Caco-2 (cell line): ENCODE measurements at regions of chr2 and their contacts with region 1.

Region 1: DNA sequence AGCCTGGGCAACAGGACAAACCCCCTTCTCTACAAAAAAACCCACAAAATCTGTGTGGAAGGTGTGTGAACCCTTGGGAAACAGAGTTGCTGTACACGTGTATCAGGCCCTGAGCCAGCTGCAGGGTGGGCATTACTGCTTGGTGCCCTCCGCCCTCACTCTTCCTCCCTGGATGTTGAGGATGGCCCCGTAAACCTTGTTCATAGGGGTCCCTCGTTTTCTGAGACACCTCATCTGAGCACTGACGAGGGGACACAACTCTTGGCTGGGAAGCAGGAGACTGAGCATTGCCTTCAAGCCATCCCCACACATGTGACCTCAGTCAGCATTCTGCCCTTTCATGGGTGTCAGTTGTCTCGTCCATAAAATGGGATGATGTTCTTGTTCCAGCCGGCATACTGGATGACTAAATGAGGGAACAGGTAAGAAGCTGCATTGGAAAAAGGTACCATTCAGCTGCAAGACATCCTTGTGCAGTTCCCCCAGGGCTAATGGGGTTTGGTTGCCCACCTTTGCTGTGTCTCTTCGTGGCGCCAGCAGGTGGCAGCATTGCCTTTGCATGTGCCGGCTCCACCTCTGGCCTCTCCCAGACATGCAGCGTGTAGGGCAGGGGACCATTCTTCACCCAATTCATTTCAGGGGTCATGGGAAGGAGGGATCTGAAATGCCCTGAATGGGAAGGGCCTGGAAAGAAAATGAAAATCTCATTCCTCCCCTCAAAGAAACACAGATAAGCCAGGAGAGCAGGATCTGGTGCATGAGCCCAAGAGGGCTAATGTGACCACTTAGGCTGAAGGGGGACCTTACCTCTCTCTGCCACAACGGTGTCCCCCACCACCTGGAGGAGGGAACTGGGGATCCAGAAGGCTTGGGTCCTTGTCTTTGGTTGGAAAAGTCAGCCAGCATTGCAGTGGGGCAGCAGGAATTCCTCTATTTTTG is 36.4 kb upstream of the HAAO start:
- DNase-seq: peak; percentile 80 to 83
- H3K4me3 ChIP-seq: no peak overlapping the region
- H3K4me3 Mint-ChIP-seq: no peak overlapping the region
- H3K27ac Mint-ChIP-seq: no peak overlapping the region
- H3K4me1 ChIP-seq: peaks cover 7% of the 10 kb centered on the region; the same call in 1 of the 2 replicates
- H3K4me1 Mint-ChIP-seq: peaks cover 6% of the 10 kb centered on the region
- H3K27me3 ChIP-seq: no peaks in the 10 kb centered on the region
- H3K27me3 Mint-ChIP-seq: no peaks in the 10 kb centered on the region
- CTCF ChIP-seq: peak; percentile 92 to 93

Region 2: GRCh38 chr2:42810121-42810970 is 18.4 kb before region 1 on chr2:
- CTCF ChIA-PET with region 1: interaction called, 17 read pairs
- POLR2A ChIA-PET with region 1: no interaction called
- intact Hi-C with region 1: no loop called
- DNase-seq: peak; percentile 95 to 97
- H3K4me3 ChIP-seq: peak overlapping the region; percentile 80
- H3K4me3 Mint-ChIP-seq: peak overlapping the region; percentile 96
- H3K27ac Mint-ChIP-seq: peak overlapping the region; percentile 94
- H3K4me1 ChIP-seq: peaks cover 5% of the 10 kb centered on the region; the same call in 1 of the 2 replicates
- H3K4me1 Mint-ChIP-seq: peaks cover 14% of the 10 kb centered on the region
- H3K27me3 ChIP-seq: no peaks in the 10 kb centered on the region
- H3K27me3 Mint-ChIP-seq: no peaks in the 10 kb centered on the region
- CTCF ChIP-seq: peak in 1 of 2 experiments; percentile 3

Region 3: DNA sequence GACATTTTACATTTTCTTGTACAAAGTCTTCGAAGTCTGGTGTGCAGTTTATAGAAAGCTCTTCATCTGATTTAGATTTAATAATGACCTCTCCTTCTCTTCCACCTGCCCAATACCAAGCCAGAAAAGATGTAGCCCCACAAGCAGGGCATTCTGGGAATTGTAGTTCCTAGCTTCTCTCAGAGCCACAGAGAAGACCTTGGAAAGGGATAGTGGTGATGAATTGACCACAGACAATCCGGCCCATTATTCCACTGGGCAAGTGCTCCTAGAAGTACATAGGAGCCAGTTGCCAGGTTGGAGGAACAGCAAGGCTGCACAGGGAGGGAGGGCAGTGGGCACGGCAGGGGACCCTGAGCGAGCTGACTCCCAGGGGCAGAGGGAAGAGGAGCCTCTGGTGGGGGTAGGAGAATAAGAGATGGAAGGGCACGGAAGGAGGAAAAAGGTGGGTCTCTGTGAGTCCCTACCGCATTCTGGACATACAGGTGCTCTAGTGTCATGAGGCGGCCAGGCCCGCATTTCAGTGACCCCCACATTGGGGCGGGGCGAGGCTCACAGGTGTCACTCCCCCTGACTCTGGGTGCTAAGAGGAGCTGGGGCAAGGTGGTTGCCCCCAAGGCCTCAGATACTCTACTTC is 116.1 kb after region 1 on chr2:
- CTCF ChIA-PET with region 1: no interaction called
- POLR2A ChIA-PET with region 1: no interaction called
- intact Hi-C with region 1: loop called (anchors 1 kb)
- DNase-seq: no peak
- H3K4me3 ChIP-seq: no peak overlapping the region
- H3K4me3 Mint-ChIP-seq: no peak overlapping the region
- H3K27ac Mint-ChIP-seq: no peak overlapping the region
- H3K4me1 ChIP-seq: peaks cover 52% of the 10 kb centered on the region
- H3K4me1 Mint-ChIP-seq: peaks cover 36% of the 10 kb centered on the region
- H3K27me3 ChIP-seq: no peaks in the 10 kb centered on the region
- H3K27me3 Mint-ChIP-seq: no peaks in the 10 kb centered on the region
- CTCF ChIP-seq: no peak

Region 4: DNA sequence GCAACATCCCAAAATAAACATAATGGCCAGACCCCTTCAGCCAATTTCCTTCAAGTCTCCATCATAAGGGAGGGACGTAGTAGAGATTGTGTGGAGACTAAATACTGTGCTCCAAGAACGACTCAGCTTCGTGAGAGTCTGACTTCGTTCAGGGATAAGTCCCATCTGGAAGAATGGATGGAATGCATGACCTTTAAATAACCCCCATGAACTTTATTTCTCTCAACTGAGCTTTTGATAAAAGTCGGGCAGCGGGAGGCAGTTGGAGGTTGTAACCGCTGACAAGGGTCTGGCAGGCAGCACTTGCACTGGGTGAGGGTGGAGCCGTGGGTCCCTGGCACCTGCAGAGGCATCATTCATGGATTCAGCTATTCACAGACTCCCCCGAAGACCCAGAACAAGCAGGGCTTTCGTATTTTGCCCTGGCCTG is 281.7 kb after region 1 on chr2:
- CTCF ChIA-PET with region 1: no interaction called
- POLR2A ChIA-PET with region 1: no interaction called
- intact Hi-C with region 1: loop called (anchors 5 kb)
- DNase-seq: peak; percentile 36 to 64
- H3K4me3 ChIP-seq: no peak overlapping the region
- H3K4me3 Mint-ChIP-seq: no peak overlapping the region
- H3K27ac Mint-ChIP-seq: no peak overlapping the region
- H3K4me1 ChIP-seq: peaks cover 34% of the 10 kb centered on the region
- H3K4me1 Mint-ChIP-seq: peaks cover 48% of the 10 kb centered on the region
- H3K27me3 ChIP-seq: no peaks in the 10 kb centered on the region; the same call in 1 of the 2 replicates
- H3K27me3 Mint-ChIP-seq: no peaks in the 10 kb centered on the region
- CTCF ChIP-seq: no peak

Region 5: GRCh38 chr2:43542285-43542937 is 713.7 kb after region 1 on chr2:
- CTCF ChIA-PET with region 1: no interaction called
- POLR2A ChIA-PET with region 1: no interaction called
- intact Hi-C with region 1: loop called (anchors 1 kb)
- DNase-seq: peak in 1 of 2 experiments; percentile 19
- H3K4me3 ChIP-seq: no peak overlapping the region
- H3K4me3 Mint-ChIP-seq: no peak overlapping the region
- H3K27ac Mint-ChIP-seq: no peak overlapping the region
- H3K4me1 ChIP-seq: peaks cover 3% of the 10 kb centered on the region; the same call in 1 of the 2 replicates
- H3K4me1 Mint-ChIP-seq: no peaks in the 10 kb centered on the region
- H3K27me3 ChIP-seq: no peaks in the 10 kb centered on the region
- H3K27me3 Mint-ChIP-seq: no peaks in the 10 kb centered on the region
- CTCF ChIP-seq: peak; percentile 37 to 68

Region 6: GRCh38 chr2:43611987-43612894 is 783.5 kb after region 1 on chr2:
- CTCF ChIA-PET with region 1: no interaction called
- POLR2A ChIA-PET with region 1: no interaction called
- intact Hi-C with region 1: loop called (anchors 1 kb)
- DNase-seq: peak; percentile 74 to 84
- H3K4me3 ChIP-seq: no peak overlapping the region
- H3K4me3 Mint-ChIP-seq: no peak overlapping the region
- H3K27ac Mint-ChIP-seq: no peak overlapping the region
- H3K4me1 ChIP-seq: no peaks in the 10 kb centered on the region
- H3K4me1 Mint-ChIP-seq: peaks cover 18% of the 10 kb centered on the region
- H3K27me3 ChIP-seq: no peaks in the 10 kb centered on the region; the same call in 1 of the 2 replicates
- H3K27me3 Mint-ChIP-seq: peaks cover 2% of the 10 kb centered on the region
- CTCF ChIP-seq: peak; percentile 87 to 88